ENCODE measurements at regions of chr14 and their contacts with region 1.

Region 1: GRCh38 chr14:102316743-102317563 is 2.6 kb upstream of the ZNF839 start:
- DNase-seq: peak; percentile 93 to 97 (median 95)
- ATAC-seq: peak; percentile 83
- H3K4me3 ChIP-seq: peak overlapping the region; percentile 14
- H3K4me1 ChIP-seq: peaks cover 17% of the 10 kb centered on the region
- CTCF ChIP-seq: peak; percentile 77

Region 2: DNA sequence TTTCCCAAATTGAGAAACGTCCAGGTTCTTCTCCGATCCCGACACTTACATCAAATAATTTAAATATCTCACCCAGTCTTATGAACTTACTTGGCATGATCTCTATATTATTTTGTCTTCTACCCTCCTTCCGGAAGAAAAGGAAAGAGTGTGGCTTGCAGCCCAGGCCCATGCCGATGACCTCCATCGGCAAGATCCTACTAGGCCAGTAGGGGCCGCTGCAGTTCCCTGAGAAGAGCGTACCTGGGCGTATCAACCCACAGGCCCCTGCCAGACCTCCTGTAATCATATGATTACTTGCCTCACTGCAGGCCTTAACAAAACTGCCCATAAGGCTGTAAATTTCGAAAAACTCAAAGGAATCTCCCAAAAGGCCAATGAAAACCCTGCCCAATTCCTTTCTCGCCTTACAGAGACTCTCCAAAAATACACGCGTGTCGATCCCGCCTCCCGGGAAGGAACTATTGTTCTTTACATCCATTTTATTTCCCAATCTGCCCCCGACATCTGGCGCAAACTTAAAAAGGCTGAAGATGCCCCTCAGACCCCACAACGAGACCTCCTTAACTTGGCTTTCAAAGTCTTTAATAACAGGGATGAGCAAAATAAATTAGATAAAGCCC is 81.6 kb before region 1 on chr14:
- intact Hi-C with region 1: loop called (anchors 5 to 10 kb)
- DNase-seq: peak; percentile 73 to 91 (median 87)
- ATAC-seq: peak; percentile 97
- H3K4me3 ChIP-seq: no peak overlapping the region
- H3K4me1 ChIP-seq: no peaks in the 10 kb centered on the region
- CTCF ChIP-seq: peak; percentile 60

Measured in mucosa of descending colon (tissue), 3 donors.